Mammary epithelial cell (primary cell): ENCODE measurements at regions of chr10 and their contacts with region 1.

Region 1: GRCh38 chr10:18368273-18368672 is 228.0 kb downstream of the CACNB2 start:
- DNase-seq: no peak
- H3K4me3 ChIP-seq: no peak overlapping the region
- H3K27ac ChIP-seq: no peak overlapping the region
- H3K4me1 ChIP-seq: no peaks in the 10 kb centered on the region
- H3K27me3 ChIP-seq: no peaks in the 10 kb centered on the region
- CTCF ChIP-seq: no peak

Region 2: GRCh38 chr10:17768957-17769356 is 599.3 kb before region 1 on chr10:
- CTCF ChIA-PET with region 1: interaction called, 11 read pairs
- dilution Hi-C with region 1: no loop called
- in situ Hi-C with region 1: no loop called
- intact Hi-C with region 1: no loop called
- DNase-seq: no peak
- H3K4me3 ChIP-seq: no peak overlapping the region
- H3K27ac ChIP-seq: no peak overlapping the region
- H3K4me1 ChIP-seq: peaks cover 7% of the 10 kb centered on the region
- H3K27me3 ChIP-seq: no peaks in the 10 kb centered on the region
- CTCF ChIP-seq: no peak